MCF 10A (cell line): ENCODE measurements at regions of chr11 and their contacts with region 1.

Region 1: GRCh38 chr11:94405062-94405833 is 4.0 kb upstream of the GPR83 start:
- DNase-seq: no peak
- H3K4me3 Mint-ChIP-seq: no peak overlapping the region
- H3K27ac Mint-ChIP-seq: no peak overlapping the region
- H3K4me1 Mint-ChIP-seq: no peaks in the 10 kb centered on the region
- H3K27me3 Mint-ChIP-seq: peaks cover 11% of the 10 kb centered on the region
- CTCF ChIP-seq: no peak

Region 2: GRCh38 chr11:94417386-94417987 is 12.2 kb after region 1 on chr11:
- CTCF ChIA-PET with region 1: interaction called, 25 read pairs
- POLR2A ChIA-PET with region 1: no interaction called
- intact Hi-C with region 1: no loop called
- DNase-seq: peak; percentile 44
- H3K4me3 Mint-ChIP-seq: no peak overlapping the region
- H3K27ac Mint-ChIP-seq: no peak overlapping the region
- H3K4me1 Mint-ChIP-seq: no peaks in the 10 kb centered on the region
- H3K27me3 Mint-ChIP-seq: no peaks in the 10 kb centered on the region
- CTCF ChIP-seq: peak; percentile 47

Region 3: DNA sequence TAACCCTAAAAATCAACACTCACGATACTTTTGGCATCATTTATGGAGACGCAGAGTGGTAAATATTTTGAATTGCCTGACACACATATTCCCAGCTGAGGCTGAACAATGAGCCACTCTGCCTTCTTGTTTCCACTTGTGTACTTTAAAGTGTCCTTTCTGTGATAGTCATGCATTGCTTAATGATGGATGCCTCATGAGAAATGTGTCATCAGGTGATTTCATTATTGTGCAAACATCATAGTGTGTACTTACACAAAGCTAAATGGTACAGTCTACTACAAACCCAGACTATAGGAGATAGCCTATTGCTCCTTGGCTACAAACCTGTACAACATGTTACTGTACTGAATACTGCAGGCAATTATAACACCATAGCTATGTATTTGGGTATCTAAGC is 44.2 kb after region 1 on chr11:
- CTCF ChIA-PET with region 1: no interaction called
- POLR2A ChIA-PET with region 1: no interaction called
- intact Hi-C with region 1: no loop called
- DNase-seq: peak; percentile 91
- H3K4me3 Mint-ChIP-seq: no peak overlapping the region
- H3K27ac Mint-ChIP-seq: peak overlapping the region; percentile 36
- H3K4me1 Mint-ChIP-seq: peaks cover 7% of the 10 kb centered on the region
- H3K27me3 Mint-ChIP-seq: no peaks in the 10 kb centered on the region
- CTCF ChIP-seq: no peak